ENCODE measurements at regions of chr19 and their contacts with region 1.

Region 1: DNA sequence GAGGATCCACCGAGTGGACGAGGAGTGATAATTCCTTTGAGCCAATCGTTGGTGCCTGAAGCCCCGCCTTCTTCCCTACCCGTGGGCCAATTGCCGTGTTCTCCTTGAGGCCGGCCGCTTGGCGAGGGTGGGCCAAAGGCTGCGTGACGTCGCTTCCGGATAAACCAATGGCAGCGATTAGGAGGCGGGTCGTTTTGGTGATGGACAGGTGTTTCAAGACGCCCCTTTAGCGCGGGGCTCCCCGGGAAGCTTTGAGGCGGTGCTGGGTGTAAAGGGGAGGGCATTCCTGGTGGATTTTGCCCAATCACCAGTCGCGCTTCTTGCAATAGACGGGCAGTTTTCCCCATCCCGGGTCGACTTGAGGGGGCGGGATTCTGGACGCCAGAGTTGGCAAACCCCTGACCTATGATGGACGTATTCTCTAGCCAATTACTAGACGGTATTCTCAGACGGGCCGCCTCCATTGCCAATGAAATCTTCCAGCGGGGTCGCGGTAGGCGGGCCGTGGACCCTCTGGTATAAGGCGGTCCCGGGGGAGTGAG is 310 bp upstream of the PRMT1 start:
- DNase-seq: peak; percentile 99 to 100
- ATAC-seq: peak; percentile 85 to 93 (median 90)
- H3K4me3 ChIP-seq: peak overlapping the region; percentile 89 to 100 (median 98)
- H3K27ac ChIP-seq: peak overlapping the region; percentile 92 to 99 (median 97)
- H3K4me1 ChIP-seq: peaks cover 17 to 59% (median 50%) of the 10 kb centered on the region in 9 donors
- H3K27me3 ChIP-seq: no peaks in the 10 kb centered on the region
- CTCF ChIP-seq: no peak

Region 2: GRCh38 chr19:49451430-49452181 is 225.2 kb before region 1 on chr19 and contains the start of gene PIH1D1:
- intact Hi-C with region 1: loop called in 1 of 10 experiments (anchors 5 kb)
- DNase-seq: peak; percentile 91 to 99
- ATAC-seq: peak; percentile 55 to 86 (median 84)
- H3K4me3 ChIP-seq: peak within 1 kb of the TSS; percentile 40 to 91 (median 64)
- H3K27ac ChIP-seq: peak within 1 kb of the TSS; percentile 85 to 96 (median 92)
- H3K4me1 ChIP-seq: peaks cover 0 to 53% (median 21%) of the 10 kb centered on the region in 9 donors
- H3K27me3 ChIP-seq: no peaks in the 10 kb centered on the region
- CTCF ChIP-seq: peak in 3 of 9 donors; percentile 10 to 33 (median 10)
- total RNA-seq, gene PIH1D1: 15.7 to 42.1 (median 25.7) TPM

Region 3: DNA sequence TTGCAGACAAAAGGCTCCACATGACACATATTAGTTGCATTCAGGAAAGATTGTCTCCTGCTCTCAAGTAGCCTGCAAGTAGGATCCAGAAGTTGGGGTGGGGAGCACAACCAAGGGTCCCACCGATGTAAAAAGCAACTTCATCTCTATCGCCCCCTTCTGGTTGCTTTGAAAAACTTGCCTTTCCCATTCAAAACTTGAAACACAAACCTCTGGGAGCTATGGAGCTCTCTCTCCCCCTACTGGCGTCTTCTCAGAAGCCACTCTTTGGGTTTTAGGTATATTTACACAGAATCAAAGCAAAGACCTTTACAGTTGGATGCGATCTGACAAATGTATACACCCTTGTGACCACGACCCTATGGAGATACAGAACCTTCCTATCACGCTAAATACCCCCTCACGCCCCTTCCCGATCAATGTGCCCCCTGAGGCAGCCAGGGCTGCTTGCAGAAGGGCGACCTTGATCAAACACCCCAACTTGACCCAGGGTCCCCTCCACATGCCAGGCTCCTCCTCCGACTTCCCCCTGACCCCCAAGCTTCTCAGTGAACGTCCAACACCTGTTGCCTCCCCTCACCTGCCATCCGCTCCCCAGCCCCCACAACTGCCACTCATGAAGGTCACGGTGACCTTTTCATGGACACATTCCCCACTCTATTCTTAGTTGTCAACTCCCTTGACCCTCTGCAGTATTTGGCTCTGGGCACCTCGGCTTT is 106.5 kb before region 1 on chr19:
- intact Hi-C with region 1: loop called in 1 of 10 experiments (anchors 10 kb)
- DNase-seq: peak in 1 of 2 donors; percentile 74
- ATAC-seq: peak; percentile 58 to 84 (median 73)
- H3K4me3 ChIP-seq: no peak overlapping the region
- H3K27ac ChIP-seq: peak overlapping the region in 9 of 10 donors; percentile 19 to 83 (median 79)
- H3K4me1 ChIP-seq: peaks cover 8 to 48% (median 31%) of the 10 kb centered on the region in 9 donors
- H3K27me3 ChIP-seq: no peaks in the 10 kb centered on the region
- CTCF ChIP-seq: peak; percentile 95 to 99 (median 98)

Region 4: GRCh38 chr19:49590071-49590970 is 86.4 kb before region 1 on chr19:
- intact Hi-C with region 1: loop called in 5 of 10 experiments (anchors 5 to 10 kb)
- DNase-seq: peak; percentile 94 to 95
- ATAC-seq: peak; percentile 79 to 91 (median 88)
- H3K4me3 ChIP-seq: peak overlapping the region; percentile 65 to 89 (median 81)
- H3K27ac ChIP-seq: peak overlapping the region; percentile 76 to 98 (median 92)
- H3K4me1 ChIP-seq: peaks cover 6 to 37% (median 22%) of the 10 kb centered on the region in 9 donors
- H3K27me3 ChIP-seq: no peaks in the 10 kb centered on the region
- CTCF ChIP-seq: peak in 3 of 9 donors; percentile 10 to 25 (median 25)

Region 5: DNA sequence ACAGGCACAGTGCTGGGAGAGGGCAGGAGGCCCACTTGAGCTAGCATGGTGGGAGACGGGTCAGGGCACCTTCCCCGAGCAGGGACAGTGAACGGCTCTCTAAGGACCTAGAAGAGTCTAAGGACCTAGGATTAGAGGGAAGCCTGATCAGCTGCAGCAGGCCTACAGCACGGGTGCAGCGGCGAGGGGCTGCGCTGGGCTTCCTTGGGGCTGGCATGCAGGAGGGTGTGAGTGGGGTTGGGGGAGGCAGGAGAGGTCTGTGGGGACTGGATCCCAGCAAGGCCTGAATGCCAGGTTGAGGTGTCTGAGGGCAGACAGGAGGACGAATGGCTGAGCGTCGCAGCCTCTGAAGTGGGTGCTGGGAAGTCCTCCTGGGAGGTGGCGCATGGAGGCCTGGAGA is 31.2 kb before region 1 on chr19:
- intact Hi-C with region 1: loop called in 4 of 10 experiments (anchors 1 to 2 kb)
- DNase-seq: no peak
- ATAC-seq: no peak
- H3K4me3 ChIP-seq: no peak overlapping the region
- H3K27ac ChIP-seq: no peak overlapping the region
- H3K4me1 ChIP-seq: peaks cover 4 to 45% (median 26%) of the 10 kb centered on the region in 9 donors
- H3K27me3 ChIP-seq: no peaks in the 10 kb centered on the region
- CTCF ChIP-seq: no peak

Region 6: DNA sequence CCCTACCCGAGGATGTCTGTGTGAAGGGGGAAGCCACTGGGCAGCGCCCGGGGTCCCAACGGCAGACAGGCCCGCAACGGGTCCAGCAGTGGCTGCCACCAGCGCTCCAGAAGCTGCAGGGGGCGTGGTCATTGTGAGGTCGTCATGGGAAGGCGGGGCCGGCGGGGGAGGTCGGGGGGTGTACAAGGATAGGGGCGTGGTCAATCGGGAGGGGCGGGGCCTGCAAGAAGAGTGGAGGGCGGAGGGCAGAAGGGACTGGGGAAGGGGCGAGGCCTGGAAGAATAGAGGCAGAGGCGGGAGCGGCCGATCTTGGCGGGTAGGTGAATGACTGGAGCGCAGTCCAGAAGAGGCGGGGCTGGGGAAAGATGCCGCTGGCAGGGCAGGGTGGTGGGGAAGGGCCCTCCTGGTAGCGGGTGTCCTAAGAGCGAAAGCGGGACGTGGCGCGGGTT is 132.0 kb after region 1 on chr19:
- intact Hi-C with region 1: loop called in 1 of 10 experiments (anchors 10 kb)
- DNase-seq: peak; percentile 95 to 96
- ATAC-seq: peak; percentile 75 to 83 (median 78)
- H3K4me3 ChIP-seq: peak overlapping the region; percentile 56 to 87 (median 82)
- H3K27ac ChIP-seq: peak overlapping the region; percentile 72 to 89 (median 84)
- H3K4me1 ChIP-seq: peaks cover 8 to 36% (median 23%) of the 10 kb centered on the region in 9 donors
- H3K27me3 ChIP-seq: no peaks in the 10 kb centered on the region
- CTCF ChIP-seq: no peak

Region 7: DNA sequence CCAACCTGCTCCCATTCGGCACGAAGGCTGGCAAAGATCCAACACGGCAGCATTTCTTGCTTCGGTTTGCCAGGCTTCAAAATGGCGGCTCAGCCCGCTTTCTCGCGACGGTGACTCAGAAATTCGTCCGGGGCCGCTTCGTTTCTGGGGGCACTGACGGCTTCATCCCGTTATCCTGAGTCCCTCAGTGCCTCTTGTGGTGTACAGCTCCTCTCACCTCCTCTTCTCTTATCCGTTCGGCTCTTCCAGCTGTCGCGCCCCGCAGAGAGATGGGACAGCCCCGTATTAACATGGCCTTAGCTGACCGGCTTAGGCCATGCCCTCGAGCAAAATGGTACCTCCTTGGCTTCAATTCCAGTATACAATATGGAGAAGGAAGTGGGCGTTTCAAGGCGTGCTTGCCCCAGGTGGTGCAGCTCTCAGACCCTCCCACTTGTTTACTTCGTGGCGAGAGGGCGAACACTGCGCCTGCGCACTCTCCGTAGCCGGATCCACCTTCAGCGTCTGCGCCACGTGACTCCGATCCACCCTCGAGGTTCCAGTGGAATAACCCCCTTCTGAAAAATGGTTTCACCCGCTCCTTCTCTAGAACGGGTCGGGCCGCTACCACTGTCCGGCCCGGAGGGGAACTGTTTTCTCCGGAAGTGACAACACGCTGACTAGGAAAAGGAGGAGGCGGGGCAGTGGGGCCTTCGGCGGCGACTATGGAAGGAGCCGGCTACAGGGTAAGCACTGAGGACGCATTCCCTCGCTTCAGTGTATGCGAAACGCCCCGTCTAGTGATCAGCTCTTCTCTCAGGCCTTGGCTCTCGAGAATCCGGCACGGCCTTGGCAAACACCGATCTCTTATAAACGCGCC is 200.5 kb after region 1 on chr19 and contains the starts of genes AKT1S1 and TBC1D17:
- intact Hi-C with region 1: loop called in 1 of 10 experiments (anchors 5 kb)
- DNase-seq: peak; percentile 99 to 100
- ATAC-seq: peak; percentile 78 to 92 (median 87)
- H3K4me3 ChIP-seq: peak within 1 kb of the TSS; percentile 61 to 95 (median 81)
- H3K27ac ChIP-seq: peak within 1 kb of the TSS; percentile 91 to 99 (median 98)
- H3K4me1 ChIP-seq: peaks cover 9 to 36% (median 26%) of the 10 kb centered on the region in 9 donors
- H3K27me3 ChIP-seq: no peaks in the 10 kb centered on the region
- CTCF ChIP-seq: no peak
- total RNA-seq, gene AKT1S1: 26.0 to 51.9 (median 32.4) TPM
- total RNA-seq, gene TBC1D17: 40.6 to 57.9 (median 50.6) TPM